WTC11 (cell line): ENCODE measurements at regions of chr19 and their contacts with region 1.

Region 1: DNA sequence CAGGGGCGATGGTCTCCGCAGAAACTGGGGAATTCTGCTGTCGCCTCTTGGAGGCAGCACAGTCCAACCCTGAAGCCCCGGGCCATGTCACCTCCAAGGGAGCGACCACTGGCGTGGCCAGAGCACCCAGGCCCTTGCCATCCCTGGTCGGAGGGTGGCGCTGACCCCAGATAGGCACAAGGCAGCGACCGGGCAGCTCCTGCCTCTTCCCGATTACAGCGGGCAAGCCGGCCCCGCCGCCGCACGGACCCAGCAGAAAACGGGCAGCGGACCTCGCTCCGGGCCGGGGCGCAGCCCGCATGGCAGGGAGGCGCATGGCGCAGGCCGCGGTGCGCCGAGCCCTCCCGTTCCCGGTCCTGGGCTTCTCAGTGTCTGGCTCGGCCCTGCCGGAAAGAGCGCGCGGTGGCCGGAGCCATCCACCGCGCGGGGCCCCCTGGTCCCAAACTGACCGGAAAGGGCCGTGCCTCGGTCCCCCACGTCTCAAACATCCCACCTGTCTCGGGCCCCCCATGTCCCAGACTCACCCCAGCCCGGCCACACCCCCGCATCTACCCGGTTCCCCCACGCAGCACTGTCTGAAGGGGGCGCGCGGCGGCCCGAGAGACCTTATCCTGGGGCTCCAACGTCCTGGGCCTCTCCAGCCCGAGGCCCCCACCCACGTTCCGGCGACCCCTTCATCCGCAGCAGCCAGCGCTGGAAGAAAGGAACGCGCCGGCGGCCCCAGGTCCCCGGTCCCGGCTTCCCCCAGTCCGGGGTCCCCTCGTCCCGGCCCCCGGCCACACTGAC is 727 bp downstream of the CERS1 start:
- DNase-seq: peak; percentile 78
- ATAC-seq: peak; percentile 65
- H3K4me3 Mint-ChIP-seq: peak overlapping the region; percentile 72
- H3K27ac Mint-ChIP-seq: no peak overlapping the region
- H3K4me1 Mint-ChIP-seq: no peaks in the 10 kb centered on the region
- H3K27me3 Mint-ChIP-seq: peaks cover 16% of the 10 kb centered on the region
- CTCF ChIP-seq: peak; percentile 15; the same call in 1 of the 2 replicates

Region 2: DNA sequence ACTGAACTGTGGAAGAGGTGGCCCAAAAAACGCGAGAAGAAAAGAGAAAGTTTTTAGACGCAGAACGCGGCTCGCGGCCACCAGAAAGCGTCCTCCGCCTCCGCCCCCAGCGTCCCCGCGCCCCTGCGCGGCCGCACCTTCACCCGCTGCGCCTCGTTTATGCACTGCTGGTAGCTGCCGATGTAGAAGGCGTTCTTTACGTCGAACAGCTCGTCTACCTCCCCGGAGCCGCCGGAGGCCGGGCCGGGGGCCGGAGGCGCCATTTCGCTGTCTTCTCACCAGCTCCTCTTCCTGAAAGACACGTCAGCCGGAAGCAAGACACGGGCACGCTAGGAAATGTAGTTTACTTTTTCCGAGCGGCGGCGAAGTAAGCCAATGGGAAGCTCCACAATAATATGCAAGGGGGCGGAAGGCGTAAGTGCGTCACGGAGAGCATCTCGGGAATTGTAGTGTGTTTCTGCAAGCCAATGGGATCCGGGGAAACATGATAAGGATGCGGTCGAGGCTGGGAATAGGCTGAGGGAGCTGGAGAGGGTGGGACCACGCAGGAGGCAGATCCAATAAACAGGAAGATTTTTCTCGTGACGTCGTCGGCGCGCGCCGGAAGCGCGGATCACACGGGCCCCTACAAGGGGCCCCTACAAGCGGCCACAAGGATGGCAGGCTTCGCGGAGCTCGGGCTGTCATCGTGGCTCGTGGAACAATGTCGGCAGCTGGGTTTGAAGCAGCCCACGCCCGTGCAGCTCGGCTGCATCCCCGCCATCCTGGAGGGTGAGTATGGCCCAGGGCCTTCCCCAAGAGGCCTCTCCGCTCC is 24.1 kb after region 1 on chr19 and contains the starts of genes COPE and DDX49:
- CTCF ChIA-PET with region 1: interaction called, 19 read pairs
- POLR2A ChIA-PET with region 1: interaction called, 3 read pairs
- DNase-seq: peak; percentile 97
- ATAC-seq: peak; percentile 99
- H3K4me3 Mint-ChIP-seq: peak within 1 kb of the TSS; percentile 99
- H3K27ac Mint-ChIP-seq: peak within 1 kb of the TSS; percentile 93
- H3K4me1 Mint-ChIP-seq: peaks cover 10% of the 10 kb centered on the region
- H3K27me3 Mint-ChIP-seq: no peaks in the 10 kb centered on the region; the same call in 1 of the 2 replicates
- CTCF ChIP-seq: no peak
- total RNA-seq, gene COPE: 224 to 240 TPM (median 228 TPM) in 3 replicates
- total RNA-seq, gene DDX49: 30.1 to 47.9 TPM (median 36.4 TPM) in 3 replicates

Region 3: DNA sequence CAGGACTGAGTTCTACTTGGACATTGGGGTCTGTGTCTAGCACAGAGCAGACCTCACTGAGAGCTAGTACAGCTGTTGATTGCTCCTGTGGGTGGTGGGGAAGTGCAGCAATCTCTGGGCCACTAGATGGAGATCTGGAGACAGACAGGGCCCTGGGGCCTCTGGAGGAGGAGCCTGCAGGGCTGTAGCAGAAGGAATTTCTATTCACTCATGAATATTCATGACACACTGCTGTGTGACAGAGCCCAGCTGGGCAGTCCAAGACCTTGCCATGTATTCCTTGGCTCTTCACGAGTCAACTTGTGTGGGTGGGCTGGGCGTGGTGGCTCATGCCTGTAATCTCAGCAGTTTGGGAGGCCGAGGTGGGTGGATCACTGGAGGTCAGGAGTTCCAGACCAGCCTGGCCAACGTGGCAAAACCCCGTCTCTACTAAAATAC is 100.6 kb after region 1 on chr19:
- CTCF ChIA-PET with region 1: interaction called, 10 read pairs
- POLR2A ChIA-PET with region 1: no interaction called
- DNase-seq: peak; percentile 74
- ATAC-seq: peak; percentile 98
- H3K4me3 Mint-ChIP-seq: no peak overlapping the region
- H3K27ac Mint-ChIP-seq: no peak overlapping the region
- H3K4me1 Mint-ChIP-seq: peaks cover 6% of the 10 kb centered on the region
- H3K27me3 Mint-ChIP-seq: no peaks in the 10 kb centered on the region
- CTCF ChIP-seq: peak; percentile 42